ENCODE measurements at regions of chr1 and their contacts with region 1.

Region 1: DNA sequence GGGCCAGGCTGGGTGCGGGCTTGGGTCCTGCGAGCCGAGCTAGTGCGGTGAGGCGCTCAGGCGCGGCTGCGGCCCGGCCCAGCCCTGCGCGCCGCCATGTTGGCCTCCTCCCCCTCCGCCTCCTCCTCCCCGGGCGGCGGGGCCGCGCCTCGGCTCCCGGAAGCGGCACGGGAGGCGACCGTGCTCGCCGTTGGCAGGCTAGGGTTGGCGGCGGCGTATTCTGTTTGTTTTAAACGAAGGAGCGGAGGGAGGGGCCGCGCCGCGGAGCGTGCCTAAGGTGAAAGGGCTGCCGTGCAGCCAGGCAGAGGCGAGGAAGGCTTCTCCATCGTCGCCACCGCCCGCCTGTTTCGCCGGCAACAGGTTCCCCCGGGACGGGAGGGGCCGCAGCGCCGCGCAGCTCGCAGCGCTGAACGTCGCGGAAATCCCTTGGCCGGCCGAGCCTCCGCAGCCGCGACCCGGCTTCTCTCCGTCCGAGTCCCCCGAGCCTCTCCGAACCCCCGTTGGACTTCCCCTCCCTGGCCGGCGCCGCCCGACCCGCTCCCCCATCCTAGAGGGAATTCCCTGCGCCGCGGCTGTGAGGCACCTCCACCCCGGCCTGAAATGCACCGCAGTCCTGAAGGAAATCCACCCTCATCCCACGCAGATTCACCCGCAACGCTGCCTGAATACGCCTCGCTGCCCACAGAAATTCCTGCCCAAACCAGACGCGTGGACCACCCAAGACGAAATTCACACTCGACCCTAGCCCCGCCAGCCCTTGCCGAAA is at the start of gene USP24:
- DNase-seq: peak; percentile 63
- ATAC-seq: peak; percentile 91
- H3K4me3 ChIP-seq: peak within 1 kb of the TSS; percentile 87 to 98 (median 94)
- H3K27ac ChIP-seq: peak within 1 kb of the TSS; percentile 90
- H3K4me1 ChIP-seq: peaks cover 49% of the 10 kb centered on the region
- H3K27me3 ChIP-seq: no peaks in the 10 kb centered on the region; a peak in 1 of 5 replicates
- CTCF ChIP-seq: no peak
- EP300 ChIP-seq: no peak
- POLR2A ChIP-seq: peak; percentile 67 to 81
- RAD21 ChIP-seq: no peak; the same call in 1 of the 2 replicates
- total RNA-seq, gene USP24: 47.6 and 59.5 TPM in 2 replicates

Region 2: GRCh38 chr1:55150880-55151588 is 64.4 kb before region 1 on chr1:
- CTCF ChIA-PET with region 1: no interaction called
- POLR2A ChIA-PET with region 1: no interaction called
- in situ Hi-C with region 1: no loop called
- intact Hi-C with region 1: no loop called
- DNase-seq: no peak
- ATAC-seq: no peak
- H3K4me3 ChIP-seq: no peak overlapping the region
- H3K27ac ChIP-seq: no peak overlapping the region
- H3K4me1 ChIP-seq: no peaks in the 10 kb centered on the region
- H3K27me3 ChIP-seq: no peaks in the 10 kb centered on the region
- CTCF ChIP-seq: no peak
- EP300 ChIP-seq: no peak
- POLR2A ChIP-seq: no peak
- RAD21 ChIP-seq: no peak

Region 3: GRCh38 chr1:55164906-55165305 is 50.5 kb before region 1 on chr1:
- CTCF ChIA-PET with region 1: no interaction called
- POLR2A ChIA-PET with region 1: no interaction called
- in situ Hi-C with region 1: no loop called
- intact Hi-C with region 1: loop called (anchors 10 kb)
- DNase-seq: no peak
- ATAC-seq: no peak
- H3K4me3 ChIP-seq: no peak overlapping the region
- H3K27ac ChIP-seq: no peak overlapping the region
- H3K4me1 ChIP-seq: no peaks in the 10 kb centered on the region
- H3K27me3 ChIP-seq: no peaks in the 10 kb centered on the region
- CTCF ChIP-seq: no peak
- EP300 ChIP-seq: no peak
- POLR2A ChIP-seq: no peak
- RAD21 ChIP-seq: no peak

Region 4: DNA sequence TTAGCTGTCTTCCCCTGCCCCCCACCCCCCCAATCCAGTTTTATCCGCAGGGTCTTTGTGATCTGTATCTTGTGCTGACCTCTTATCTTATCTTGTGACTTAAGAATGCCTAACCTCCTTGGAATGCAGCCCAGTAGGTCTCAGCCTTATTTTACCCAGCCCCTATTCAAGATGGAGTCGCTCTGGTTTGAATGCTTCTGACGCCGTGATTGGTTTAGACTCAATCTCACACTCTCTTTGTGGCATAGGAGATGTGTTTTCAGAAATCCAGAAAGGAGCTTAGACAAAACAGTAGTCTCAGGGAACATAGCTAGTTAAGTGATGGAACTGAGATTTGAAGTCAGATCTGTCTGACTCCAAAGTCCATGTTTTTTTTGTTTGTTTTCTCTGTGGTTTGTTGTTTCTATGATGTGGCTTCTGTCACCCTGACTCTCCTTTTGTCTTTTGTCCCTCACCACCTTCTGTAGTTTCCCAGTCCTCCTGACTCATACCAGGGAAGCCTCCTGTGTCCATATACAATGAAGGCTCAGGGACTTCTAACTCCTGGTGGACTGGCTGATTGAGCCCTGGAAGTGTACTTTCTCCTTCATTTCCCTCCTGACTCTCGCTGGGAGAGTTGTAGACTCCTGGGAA is 17.8 kb after region 1 on chr1:
- CTCF ChIA-PET with region 1: no interaction called
- POLR2A ChIA-PET with region 1: interaction called, 26 read pairs
- in situ Hi-C with region 1: no loop called
- intact Hi-C with region 1: no loop called
- DNase-seq: peak; percentile 81
- ATAC-seq: peak; percentile 93
- H3K4me3 ChIP-seq: peak overlapping the region in 2 of 3 experiments; percentile 46 to 51; a peak in 4 of 6 replicates
- H3K27ac ChIP-seq: no peak overlapping the region
- H3K4me1 ChIP-seq: peaks cover 31% of the 10 kb centered on the region
- H3K27me3 ChIP-seq: no peaks in the 10 kb centered on the region
- CTCF ChIP-seq: no peak
- EP300 ChIP-seq: peak; percentile 29 to 51; a peak in 1 of 4 replicates
- POLR2A ChIP-seq: no peak
- RAD21 ChIP-seq: no peak

Region 5: GRCh38 chr1:55284852-55285251 is 69.4 kb after region 1 on chr1:
- CTCF ChIA-PET with region 1: no interaction called
- POLR2A ChIA-PET with region 1: no interaction called
- in situ Hi-C with region 1: no loop called
- intact Hi-C with region 1: no loop called
- DNase-seq: no peak
- ATAC-seq: peak; percentile 57; the same call in 2 of the 3 replicates
- H3K4me3 ChIP-seq: no peak overlapping the region
- H3K27ac ChIP-seq: no peak overlapping the region
- H3K4me1 ChIP-seq: peaks cover 7% of the 10 kb centered on the region; the same call in 1 of the 2 replicates
- H3K27me3 ChIP-seq: no peaks in the 10 kb centered on the region; a peak in 1 of 5 replicates
- CTCF ChIP-seq: peak; percentile 64
- EP300 ChIP-seq: no peak
- POLR2A ChIP-seq: no peak
- RAD21 ChIP-seq: 0 out of 2 replicates have a peak, but pooled peaks have one; percentile 37